ENCODE measurements at regions of chr6 and their contacts with region 1.

Region 1: DNA sequence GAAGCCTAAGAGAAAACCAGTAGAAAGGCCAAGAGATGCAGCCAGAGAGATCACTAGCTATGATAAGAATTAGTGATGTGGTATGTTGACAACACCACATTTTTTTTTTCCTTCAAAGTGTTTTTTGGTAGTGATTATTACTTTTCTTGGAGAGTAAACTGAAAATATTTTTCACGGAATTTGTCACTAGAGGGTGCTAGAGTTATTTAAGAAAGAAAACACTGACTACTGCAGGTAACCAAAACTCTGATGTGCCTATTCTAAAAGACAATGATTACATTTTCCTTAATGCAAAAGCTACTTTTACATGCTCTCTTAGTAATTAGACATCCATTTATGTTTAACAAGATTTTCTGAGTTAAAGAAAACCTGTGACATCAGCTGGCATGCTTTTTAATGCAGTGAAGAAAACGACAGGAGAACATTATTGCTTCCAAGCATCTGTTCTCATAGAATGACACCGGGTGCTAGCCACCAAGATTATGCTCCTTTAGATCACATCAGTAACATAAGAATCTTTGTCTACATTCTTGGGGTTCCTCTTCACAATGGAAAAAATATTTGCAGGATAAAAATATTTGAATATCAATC is 28.8 kb downstream of the RWDD2A start:
- DNase-seq: no peak
- H3K4me3 ChIP-seq: no peak overlapping the region
- H3K27ac ChIP-seq: no peak overlapping the region
- H3K4me1 ChIP-seq: no peaks in the 10 kb centered on the region
- H3K27me3 ChIP-seq: no peaks in the 10 kb centered on the region
- CTCF ChIP-seq: peak; percentile 28

Region 2: DNA sequence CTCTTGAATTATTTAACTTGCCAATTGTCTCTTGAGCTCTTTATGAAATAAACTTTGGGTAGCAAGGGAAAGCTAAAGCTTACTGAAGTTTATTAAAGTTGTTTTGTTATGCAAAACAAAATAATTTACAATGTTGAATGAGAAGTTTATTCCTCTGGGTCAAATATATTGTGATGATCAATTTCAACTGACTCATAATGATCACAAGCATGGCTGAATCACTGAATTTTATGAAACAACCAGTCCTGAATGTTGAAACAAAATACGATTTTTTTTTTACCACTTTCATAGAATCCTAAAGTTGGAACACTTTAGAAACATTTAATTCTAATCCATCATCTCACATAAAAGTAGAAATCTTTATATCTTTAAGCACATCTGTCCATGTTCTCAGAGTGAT is 81.4 kb after region 1 on chr6:
- intact Hi-C with region 1: no loop called
- DNase-seq: no peak
- H3K4me3 ChIP-seq: no peak overlapping the region
- H3K27ac ChIP-seq: no peak overlapping the region
- H3K4me1 ChIP-seq: no peaks in the 10 kb centered on the region
- H3K27me3 ChIP-seq: no peaks in the 10 kb centered on the region
- CTCF ChIP-seq: no peak

Region 3: GRCh38 chr6:83417880-83418663 is 196.1 kb after region 1 on chr6:
- intact Hi-C with region 1: loop called (anchors 5 kb)
- DNase-seq: no peak
- H3K4me3 ChIP-seq: no peak overlapping the region
- H3K27ac ChIP-seq: no peak overlapping the region
- H3K4me1 ChIP-seq: no peaks in the 10 kb centered on the region
- H3K27me3 ChIP-seq: no peaks in the 10 kb centered on the region
- CTCF ChIP-seq: peak; percentile 69

Region 4: DNA sequence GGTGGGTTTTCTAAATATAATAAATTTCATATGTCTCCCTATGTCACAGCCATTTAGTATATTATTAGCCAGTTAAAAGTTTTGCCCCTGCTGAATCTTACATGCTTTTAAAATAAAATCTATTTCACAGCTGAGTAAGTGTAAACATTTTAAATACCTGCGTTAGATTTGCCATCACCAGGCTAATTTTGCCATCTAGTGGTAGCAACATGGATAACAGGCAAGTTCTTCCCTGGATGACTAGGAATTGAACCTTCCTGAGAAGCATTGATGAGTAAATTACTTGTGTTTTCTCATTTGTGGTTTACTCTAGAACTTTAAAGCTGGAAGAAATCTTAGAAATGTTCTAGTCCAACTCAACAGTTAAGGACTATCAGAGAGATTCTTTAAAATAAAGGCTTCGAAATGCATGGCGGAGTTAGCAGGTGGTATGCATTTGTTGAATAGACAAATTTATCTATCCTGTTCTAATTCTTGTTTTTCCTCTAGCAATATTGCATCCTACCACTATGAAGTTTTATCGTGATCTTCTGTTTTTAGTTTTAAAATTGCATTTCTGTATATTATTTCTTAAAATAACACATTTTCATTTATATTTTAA is 293.0 kb after region 1 on chr6:
- intact Hi-C with region 1: loop called (anchors 2 kb)
- DNase-seq: peak; percentile 42
- H3K4me3 ChIP-seq: no peak overlapping the region
- H3K27ac ChIP-seq: no peak overlapping the region
- H3K4me1 ChIP-seq: no peaks in the 10 kb centered on the region
- H3K27me3 ChIP-seq: no peaks in the 10 kb centered on the region
- CTCF ChIP-seq: peak; percentile 74

Region 5: DNA sequence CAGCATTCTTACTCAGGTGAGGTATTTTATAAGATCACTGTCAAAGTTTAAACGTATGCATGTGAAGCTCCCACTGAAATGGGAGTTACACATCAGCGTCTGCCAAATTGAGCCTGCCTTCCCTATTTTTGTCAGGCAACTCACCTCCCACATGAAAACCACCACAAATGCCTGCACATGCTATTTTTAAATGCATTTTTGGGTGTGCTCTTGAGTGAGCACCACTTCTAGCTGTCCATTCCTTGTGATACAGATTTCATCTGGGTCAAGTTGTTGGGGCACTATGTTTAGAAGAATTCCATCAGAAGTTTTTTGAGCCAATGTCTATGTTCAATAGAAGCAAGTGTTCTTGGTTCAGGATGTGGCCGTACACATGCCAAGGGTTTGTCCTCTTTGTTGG is 559.5 kb after region 1 on chr6:
- intact Hi-C with region 1: no loop called
- DNase-seq: no peak
- H3K4me3 ChIP-seq: no peak overlapping the region
- H3K27ac ChIP-seq: no peak overlapping the region
- H3K4me1 ChIP-seq: no peaks in the 10 kb centered on the region
- H3K27me3 ChIP-seq: no peaks in the 10 kb centered on the region
- CTCF ChIP-seq: no peak